Activated CD4-positive, alpha-beta T cell treated with anti-CD3 and anti-CD28 coated beads, Interleukin-2, amount 10 ng/mL, durations not matched to agents 24 days and 14 days (primary cell): ENCODE measurements at regions of chr4 and their contacts with region 1.

Region 1: DNA sequence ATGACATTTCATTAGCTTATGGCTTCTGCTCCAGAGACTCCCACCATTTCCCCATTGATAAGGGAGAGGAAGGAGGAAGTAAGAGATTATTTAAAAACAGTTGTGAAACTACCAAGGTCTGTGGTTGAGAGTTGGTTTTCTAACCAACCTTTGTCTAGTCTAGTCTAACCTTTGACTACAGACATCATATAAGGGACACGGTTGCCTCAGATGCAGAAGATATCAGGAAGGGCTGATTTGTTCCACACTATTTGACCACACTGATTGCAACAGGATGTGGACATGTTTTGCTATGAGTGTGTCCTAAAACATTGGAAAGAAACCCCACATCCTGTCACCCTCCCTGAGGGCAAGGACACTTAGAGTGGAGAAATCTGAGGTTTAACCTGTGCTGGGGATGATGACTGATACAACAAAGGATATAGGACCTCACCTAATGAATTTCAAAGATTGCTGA is 53.0 kb downstream of the COQ2 start:
- DNase-seq: peak; percentile 89
- H3K4me3 Mint-ChIP-seq: peak overlapping the region; percentile 48
- H3K27ac Mint-ChIP-seq: peak overlapping the region; percentile 52
- H3K4me1 Mint-ChIP-seq: peaks cover 55% of the 10 kb centered on the region
- H3K27me3 Mint-ChIP-seq: peaks cover 6% of the 10 kb centered on the region

Region 2: DNA sequence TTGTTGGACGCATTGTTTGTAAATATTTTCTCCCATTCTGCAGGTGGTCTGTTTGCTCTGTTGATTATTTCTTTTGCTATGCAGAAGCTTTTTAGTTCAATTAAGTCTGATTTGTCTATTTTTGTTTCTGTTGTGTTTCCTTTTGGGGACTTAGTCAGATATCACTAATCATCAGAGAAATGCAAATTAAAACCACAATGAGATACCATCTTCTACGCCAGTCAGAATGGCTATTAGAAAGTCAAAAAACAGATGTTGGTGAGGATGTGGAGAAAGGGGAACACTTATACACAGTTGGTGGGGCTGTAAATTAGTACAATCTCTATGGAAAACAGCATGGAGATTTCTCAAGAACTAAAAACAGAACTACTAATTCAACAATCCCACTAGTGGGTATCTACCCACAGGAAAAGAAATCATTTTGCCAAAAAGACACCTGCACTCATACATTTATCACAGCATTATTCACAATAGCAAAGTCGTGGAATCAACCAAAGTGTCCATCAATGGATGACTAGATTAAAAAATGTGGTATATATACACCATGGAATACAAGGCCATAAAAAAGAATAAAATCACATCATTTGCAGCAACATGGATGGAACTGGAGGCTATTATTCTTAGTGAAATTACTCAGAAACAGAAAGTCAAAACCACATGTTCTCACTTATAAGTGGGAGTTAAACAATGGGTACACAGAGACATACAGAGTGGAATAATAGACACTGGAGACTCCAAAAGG is 44.8 kb after region 1 on chr4:
- intact Hi-C with region 1: loop called (anchors 1 kb)
- DNase-seq: no peak
- H3K4me3 Mint-ChIP-seq: peak overlapping the region; percentile 33
- H3K27ac Mint-ChIP-seq: peak overlapping the region; percentile 75
- H3K4me1 Mint-ChIP-seq: peaks cover 23% of the 10 kb centered on the region
- H3K27me3 Mint-ChIP-seq: no peaks in the 10 kb centered on the region